ENCODE measurements at regions of chr11 and their contacts with region 1.

Region 1: GRCh38 chr11:117178210-117179034 is at the start of gene SIDT2:
- DNase-seq: peak; percentile 96 to 98 (median 96)
- ATAC-seq: peak; percentile 93 to 96 (median 96)
- H3K4me3 ChIP-seq: peak within 1 kb of the TSS; percentile 75 to 96 (median 91)
- H3K27ac ChIP-seq: peak within 1 kb of the TSS; percentile 77 to 98 (median 96)
- H3K4me1 ChIP-seq: peaks cover 0 to 43% (median 33%) of the 10 kb centered on the region in 12 donors
- H3K27me3 ChIP-seq: no peaks in the 10 kb centered on the region
- CTCF ChIP-seq: no peak
- POLR2A ChIP-seq: peak; percentile 90 to 96
- total RNA-seq, gene SIDT2: 17.2 to 45.5 (median 22.2) TPM

Region 2: GRCh38 chr11:117143871-117144476 is 34.4 kb before region 1 on chr11 and contains the start of gene PAFAH1B2:
- intact Hi-C with region 1: loop called in 5 of 10 experiments (anchors 1 to 5 kb)
- DNase-seq: peak; percentile 97 to 98 (median 97)
- ATAC-seq: peak; percentile 90 to 98 (median 97)
- H3K4me3 ChIP-seq: peak within 1 kb of the TSS; percentile 62 to 99 (median 84)
- H3K27ac ChIP-seq: peak within 1 kb of the TSS; percentile 86 to 97 (median 94)
- H3K4me1 ChIP-seq: peaks cover 0 to 46% (median 30%) of the 10 kb centered on the region in 12 donors
- H3K27me3 ChIP-seq: no peaks in the 10 kb centered on the region
- CTCF ChIP-seq: no peak
- POLR2A ChIP-seq: peak in 1 of 2 donors; percentile 83
- total RNA-seq, gene PAFAH1B2: 46.8 to 81.1 (median 68.8) TPM

Region 3: DNA sequence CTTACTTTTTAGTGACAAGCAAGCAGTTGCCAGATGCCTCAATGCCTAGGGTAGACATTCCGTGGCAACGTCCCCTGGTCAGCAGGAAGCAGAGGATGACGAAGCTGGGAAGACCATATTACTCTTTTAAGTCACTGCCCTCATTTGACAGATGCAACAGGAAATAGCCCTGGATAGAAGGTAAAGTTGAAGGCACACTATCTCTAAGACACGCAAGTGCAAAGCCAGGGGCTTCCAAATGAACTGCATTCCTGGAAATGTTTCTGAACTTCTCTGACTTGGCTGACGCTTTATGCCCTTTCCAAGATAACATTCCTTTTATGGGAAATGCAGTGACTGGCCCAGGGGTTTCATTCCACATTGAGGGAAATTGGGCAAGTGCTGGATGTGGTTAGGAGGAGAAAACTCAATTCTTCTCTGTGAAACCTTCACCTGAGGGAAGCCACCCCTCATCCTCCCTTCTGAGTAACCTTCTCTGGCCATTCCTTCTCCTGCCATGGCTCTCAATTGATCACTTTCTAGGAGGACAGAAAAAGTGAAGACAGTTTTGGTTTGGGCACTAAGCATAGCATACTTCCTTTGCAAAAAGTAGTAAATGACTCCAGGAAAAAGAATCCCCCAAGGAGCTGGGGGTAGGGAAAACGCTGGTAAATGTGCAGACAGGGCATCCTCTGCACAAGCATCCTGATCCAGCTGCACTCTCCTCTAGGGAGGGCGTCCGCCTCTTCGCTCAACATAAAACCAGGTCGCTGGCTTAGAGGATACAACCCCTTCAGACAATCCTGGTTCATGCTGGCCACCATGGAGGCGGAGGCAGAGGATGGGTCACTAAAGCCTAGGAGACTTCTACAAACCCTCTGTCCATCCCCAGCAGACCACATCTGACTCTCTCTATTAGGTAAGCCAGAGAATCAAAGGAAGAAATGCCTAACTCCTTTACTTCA is 39.0 kb after region 1 on chr11:
- intact Hi-C with region 1: loop called in 7 of 10 experiments (anchors 2 to 5 kb)
- DNase-seq: no peak
- ATAC-seq: no peak
- H3K4me3 ChIP-seq: peak overlapping the region in 1 of 12 donors; percentile 25
- H3K27ac ChIP-seq: peak overlapping the region; percentile 39 to 98 (median 88)
- H3K4me1 ChIP-seq: peaks cover 12 to 62% (median 49%) of the 10 kb centered on the region in 12 donors
- H3K27me3 ChIP-seq: no peaks in the 10 kb centered on the region
- CTCF ChIP-seq: no peak
- POLR2A ChIP-seq: no peak